ENCODE measurements at regions of chr18 and their contacts with region 1.

Region 1: GRCh38 chr18:48540251-48541025 is 1.6 kb downstream of the CTIF start:
- DNase-seq: peak; percentile 91

Region 2: GRCh38 chr18:48629730-48630324 is 89.4 kb after region 1 on chr18:
- intact Hi-C with region 1: loop called in 1 of 2 experiments (anchors 10 kb)
- DNase-seq: no peak

Region 3: GRCh38 chr18:48663931-48664847 is 123.8 kb after region 1 on chr18:
- intact Hi-C with region 1: loop called in 1 of 2 experiments (anchors 10 kb)
- DNase-seq: peak; percentile 90

Measured in posterior vena cava (tissue), 2 donors.